Prostate gland (tissue), 2 donors: ENCODE measurements at regions of chr3 and their contacts with region 1.

Region 1: DNA sequence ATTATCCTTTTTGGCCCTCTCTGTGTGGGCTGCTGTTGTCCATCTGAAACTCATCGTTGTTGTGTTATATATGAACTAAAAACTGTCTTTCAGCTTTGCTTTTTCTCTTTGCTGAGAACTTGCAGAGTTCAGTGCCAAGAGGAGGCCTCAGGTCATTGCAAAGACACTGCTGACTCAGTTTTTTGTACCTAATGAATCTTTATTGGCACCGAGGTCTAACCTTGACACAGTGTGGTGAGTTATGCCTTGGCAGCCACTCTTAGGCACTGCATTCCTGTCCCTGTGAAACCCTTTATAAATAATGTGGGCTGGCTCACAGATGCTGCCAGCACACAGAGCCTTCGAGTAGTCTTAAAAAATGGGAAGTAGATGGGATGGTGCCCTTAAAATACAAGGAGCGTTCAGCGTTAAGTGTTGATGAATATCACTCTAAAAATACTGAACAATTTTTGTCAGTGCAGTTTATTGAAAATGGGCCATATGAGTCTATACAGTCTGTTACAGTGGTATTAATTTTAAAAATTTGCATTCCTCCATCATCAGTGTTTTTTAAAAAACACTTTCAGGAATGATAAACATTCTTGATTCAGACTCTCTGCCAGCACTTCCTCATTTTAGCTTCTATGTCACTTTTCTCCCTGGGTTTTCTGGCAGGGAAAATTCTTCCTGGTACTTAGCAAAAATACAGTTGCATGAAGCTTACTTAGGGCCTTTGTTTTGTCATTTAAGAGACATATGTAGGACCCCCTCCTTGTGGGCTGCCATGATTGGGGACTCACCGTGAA is 234.1 kb downstream of the CACNA2D3 start:
- DNase-seq: peak; percentile 57
- H3K4me3 ChIP-seq: no peak overlapping the region
- H3K27ac ChIP-seq: no peak overlapping the region
- H3K4me1 ChIP-seq: no peaks in the 10 kb centered on the region
- H3K27me3 ChIP-seq: no peaks in the 10 kb centered on the region
- CTCF ChIP-seq: no peak
- POLR2A ChIP-seq: no peak

Region 2: GRCh38 chr3:54120657-54121413 is 235.6 kb before region 1 on chr3:
- intact Hi-C with region 1: loop called (anchors 5 kb)
- DNase-seq: no peak
- H3K4me3 ChIP-seq: peak overlapping the region; percentile 37 to 45
- H3K27ac ChIP-seq: no peak overlapping the region
- H3K4me1 ChIP-seq: peaks cover 7% of the 10 kb centered on the region
- H3K27me3 ChIP-seq: peaks cover 13% of the 10 kb centered on the region
- CTCF ChIP-seq: no peak
- POLR2A ChIP-seq: no peak

Region 3: DNA sequence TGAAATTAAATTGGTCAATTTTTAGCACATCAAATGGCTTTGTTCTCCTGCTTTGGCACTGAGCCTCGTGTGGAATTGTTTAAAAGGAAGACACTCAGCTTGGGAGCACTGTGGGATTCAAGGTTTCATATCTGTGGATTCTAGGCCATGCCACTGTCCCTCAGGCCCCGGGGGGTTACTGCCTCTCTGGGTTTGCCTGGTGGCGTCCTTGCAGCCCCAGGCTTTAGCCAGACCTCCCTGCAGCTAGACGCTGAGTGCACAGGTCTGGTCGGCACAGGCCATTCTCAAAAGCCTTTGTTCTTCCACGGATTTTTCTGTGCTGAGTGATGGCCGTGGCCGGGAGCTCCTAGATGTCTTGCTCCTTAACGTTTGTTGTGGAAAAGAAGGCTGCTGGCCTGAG is 157.9 kb before region 1 on chr3:
- intact Hi-C with region 1: no loop called
- DNase-seq: no peak
- H3K4me3 ChIP-seq: no peak overlapping the region
- H3K27ac ChIP-seq: no peak overlapping the region
- H3K4me1 ChIP-seq: no peaks in the 10 kb centered on the region
- H3K27me3 ChIP-seq: no peaks in the 10 kb centered on the region
- CTCF ChIP-seq: no peak
- POLR2A ChIP-seq: no peak

Region 4: DNA sequence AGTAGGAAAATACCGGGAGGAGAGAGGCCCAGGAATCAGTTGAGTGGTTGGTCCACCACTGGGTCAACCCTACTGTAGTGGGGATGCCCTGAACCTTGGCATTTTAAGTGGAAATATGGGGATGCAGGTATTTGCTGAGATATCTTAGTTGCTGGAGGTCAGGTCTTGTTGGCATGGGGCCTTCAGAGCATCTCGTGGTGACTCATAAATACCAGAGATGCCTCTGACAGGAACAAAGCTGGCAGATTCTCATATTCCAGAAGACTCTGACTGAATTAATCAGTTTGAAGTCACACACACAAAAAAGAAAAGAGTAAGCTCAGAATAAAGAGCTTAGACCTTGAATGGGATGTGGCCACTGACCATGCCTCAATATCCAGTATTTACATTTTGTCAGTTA is 142.5 kb before region 1 on chr3:
- intact Hi-C with region 1: loop called (anchors 10 kb)
- DNase-seq: no peak
- H3K4me3 ChIP-seq: no peak overlapping the region
- H3K27ac ChIP-seq: no peak overlapping the region
- H3K4me1 ChIP-seq: no peaks in the 10 kb centered on the region
- H3K27me3 ChIP-seq: no peaks in the 10 kb centered on the region
- CTCF ChIP-seq: no peak
- POLR2A ChIP-seq: no peak